Right ventricle myocardium inferior (tissue), 1 donor: ENCODE measurements at regions of chr13 and their contacts with region 1.

Region 1: GRCh38 chr13:101916108-101916757 is 463.8 kb downstream of the ITGBL1 start:
- DNase-seq: no peak
- ATAC-seq: peak; percentile 68

Region 2: GRCh38 chr13:101785858-101786257 is 130.4 kb before region 1 on chr13:
- intact Hi-C with region 1: loop called (anchors 5 kb)
- DNase-seq: no peak
- ATAC-seq: peak; percentile 70